Dendritic cell treated with granulocyte-macrophage colony-stimulating factor and Interleukin-4, amounts not matched to agents 40 ng/mL and 50 ng/mL, for 4 days (primary cell): ENCODE measurements at regions of chr5 and their contacts with region 1.

Region 1: GRCh38 chr5:140157032-140157803 is 17.8 kb upstream of the CYSTM1 start:
- H3K4me3 Mint-ChIP-seq: no peak overlapping the region
- H3K27ac Mint-ChIP-seq: no peak overlapping the region
- H3K4me1 Mint-ChIP-seq: peaks cover 20% of the 10 kb centered on the region
- H3K27me3 Mint-ChIP-seq: peaks cover 15% of the 10 kb centered on the region

Region 2: DNA sequence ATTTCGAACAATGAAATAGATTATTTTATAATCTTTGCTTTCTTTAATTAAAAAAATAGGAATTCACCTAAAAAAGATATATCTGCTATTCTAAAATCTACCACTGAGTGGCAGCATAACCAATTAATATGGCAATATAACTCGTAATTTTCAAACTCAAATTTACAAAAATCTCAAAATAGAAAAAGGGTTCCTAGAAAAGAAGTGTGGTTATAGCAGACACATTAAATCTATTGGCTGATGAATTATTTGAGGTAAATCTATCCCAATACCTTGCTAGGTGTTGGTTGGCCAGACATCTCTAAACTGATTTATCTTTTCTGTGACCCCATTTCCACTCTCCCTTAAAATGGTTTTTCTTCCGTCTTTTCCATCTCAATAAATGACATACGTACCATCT is 83.9 kb before region 1 on chr5:
- intact Hi-C with region 1: loop called (anchors 1 kb)
- H3K4me3 Mint-ChIP-seq: no peak overlapping the region
- H3K27ac Mint-ChIP-seq: no peak overlapping the region
- H3K4me1 Mint-ChIP-seq: no peaks in the 10 kb centered on the region
- H3K27me3 Mint-ChIP-seq: peaks cover 53% of the 10 kb centered on the region

Region 3: DNA sequence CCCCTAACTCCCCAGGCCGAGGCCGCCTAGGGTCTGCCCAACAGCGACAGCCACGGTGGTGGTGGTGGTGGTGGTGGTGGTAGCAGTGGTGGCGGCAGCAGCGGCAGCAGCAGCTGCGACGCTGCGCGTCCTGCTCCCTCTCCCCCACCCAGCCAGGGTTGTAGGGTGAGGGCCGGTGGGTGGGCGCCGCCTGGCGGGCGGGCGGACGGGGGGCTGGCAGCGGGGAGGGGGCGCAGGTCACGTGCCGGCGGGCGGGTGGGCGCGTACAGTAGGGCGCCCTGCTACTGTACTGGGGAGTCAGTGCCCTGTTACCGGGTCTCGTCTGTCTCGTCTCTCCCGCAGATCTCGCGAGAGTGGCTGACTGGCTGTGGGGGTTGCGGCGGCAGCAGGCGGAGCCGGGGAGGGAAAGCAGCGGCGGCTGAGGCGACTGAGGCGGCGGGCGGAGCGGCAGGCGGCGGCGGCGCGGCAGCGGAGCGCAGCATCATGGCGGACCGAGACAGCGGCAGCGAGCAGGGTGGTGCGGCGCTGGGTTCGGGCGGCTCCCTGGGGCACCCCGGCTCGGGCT is 43.4 kb before region 1 on chr5 and contains the start of gene PURA:
- intact Hi-C with region 1: no loop called
- H3K4me3 Mint-ChIP-seq: peak within 1 kb of the TSS; percentile 88
- H3K27ac Mint-ChIP-seq: peak within 1 kb of the TSS; percentile 90
- H3K4me1 Mint-ChIP-seq: peaks cover 63% of the 10 kb centered on the region
- H3K27me3 Mint-ChIP-seq: peaks cover 41% of the 10 kb centered on the region

Region 4: DNA sequence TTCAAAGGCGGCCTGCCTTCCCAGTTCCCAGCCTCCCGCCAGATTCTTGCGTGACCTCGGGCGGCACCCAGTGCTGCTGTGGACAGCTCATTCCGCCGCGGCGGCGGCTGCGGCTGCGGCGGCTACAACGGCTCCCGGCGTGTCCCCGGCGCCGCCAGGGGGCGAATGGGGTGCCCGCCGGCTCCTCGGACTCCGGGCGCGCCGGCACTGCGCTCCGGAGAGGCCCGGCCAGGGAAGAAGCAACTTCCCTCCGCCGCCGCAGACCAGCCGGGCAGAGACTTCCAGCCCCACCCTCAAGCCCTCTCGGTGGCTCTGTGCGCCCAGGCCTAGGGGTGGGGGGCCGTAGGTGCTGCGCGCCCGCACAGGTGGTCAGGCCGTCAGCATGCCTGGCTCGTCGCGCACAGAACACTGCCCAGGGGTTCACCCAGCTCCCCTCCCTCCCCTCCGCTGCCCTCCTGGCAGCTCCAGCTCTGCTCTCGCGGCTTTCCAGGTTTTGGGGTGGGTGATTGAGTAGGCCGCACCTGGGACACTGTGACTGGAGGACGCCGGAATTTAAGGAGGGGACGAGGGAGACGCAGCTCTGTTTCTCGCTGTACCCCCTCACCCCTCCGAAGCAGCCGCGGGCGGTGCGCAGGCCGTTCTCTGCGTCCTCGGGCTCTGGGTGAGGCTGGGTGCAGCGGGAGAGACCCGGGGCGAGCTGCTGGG is 11.2 kb before region 1 on chr5:
- intact Hi-C with region 1: loop called (anchors 1 kb)
- H3K4me3 Mint-ChIP-seq: peak overlapping the region; percentile 59
- H3K27ac Mint-ChIP-seq: peak overlapping the region; percentile 56
- H3K4me1 Mint-ChIP-seq: peaks cover 31% of the 10 kb centered on the region
- H3K27me3 Mint-ChIP-seq: peaks cover 50% of the 10 kb centered on the region